ENCODE measurements at regions of chr16 and their contacts with region 1.

Region 1: DNA sequence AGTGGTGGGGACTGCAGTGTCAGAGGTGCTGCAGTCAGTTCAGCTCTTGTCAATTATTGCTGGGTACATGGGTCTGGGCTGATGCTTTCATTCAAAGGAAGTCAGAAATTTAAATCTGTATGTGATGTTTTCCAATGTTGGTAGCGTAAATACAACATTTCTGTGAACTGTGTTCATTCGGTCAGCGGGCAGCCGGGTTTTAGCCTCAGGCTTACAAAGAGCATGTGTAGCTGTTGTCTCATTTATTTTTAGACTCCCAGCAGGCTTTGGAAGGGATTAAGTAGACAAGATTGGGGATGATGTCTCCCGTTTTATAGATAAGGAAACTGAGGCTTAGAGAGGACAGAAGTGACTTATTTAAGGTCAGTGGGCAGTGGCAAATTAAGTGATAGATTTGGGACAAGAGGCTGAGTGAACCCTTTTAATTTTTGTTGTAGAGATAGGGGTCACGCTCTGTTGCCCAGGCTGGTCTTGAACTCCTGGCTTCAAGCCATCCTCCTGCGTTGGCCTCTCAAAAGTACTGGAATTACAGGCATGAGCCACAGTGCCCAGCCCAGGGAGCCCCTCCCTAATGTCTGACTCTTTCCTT is 8.1 kb downstream of the AQP8 start:
- DNase-seq: no peak
- ATAC-seq: no peak
- H3K4me3 Mint-ChIP-seq: no peak overlapping the region
- H3K27ac Mint-ChIP-seq: no peak overlapping the region
- H3K4me1 Mint-ChIP-seq: peaks cover 2% of the 10 kb centered on the region
- H3K27me3 Mint-ChIP-seq: no peaks in the 10 kb centered on the region

Region 2: GRCh38 chr16:24493859-24494258 is 731.0 kb before region 1 on chr16:
- CTCF ChIA-PET with region 1: no interaction called
- POLR2A ChIA-PET with region 1: no interaction called
- intact Hi-C with region 1: no loop called
- DNase-seq: no peak
- ATAC-seq: no peak
- H3K4me3 Mint-ChIP-seq: no peak overlapping the region
- H3K27ac Mint-ChIP-seq: no peak overlapping the region
- H3K4me1 Mint-ChIP-seq: no peaks in the 10 kb centered on the region
- H3K27me3 Mint-ChIP-seq: peaks cover 7% of the 10 kb centered on the region

Region 3: GRCh38 chr16:24516900-24517669 is 707.7 kb before region 1 on chr16:
- CTCF ChIA-PET with region 1: no interaction called
- POLR2A ChIA-PET with region 1: no interaction called
- intact Hi-C with region 1: loop called in 1 of 2 experiments (anchors 10 kb)
- DNase-seq: peak; percentile 86
- ATAC-seq: peak; percentile 78
- H3K4me3 Mint-ChIP-seq: peak overlapping the region; percentile 26
- H3K27ac Mint-ChIP-seq: no peak overlapping the region
- H3K4me1 Mint-ChIP-seq: peaks cover 4% of the 10 kb centered on the region
- H3K27me3 Mint-ChIP-seq: no peaks in the 10 kb centered on the region

Region 4: GRCh38 chr16:25126820-25127232 is 98.0 kb before region 1 on chr16:
- CTCF ChIA-PET with region 1: interaction called, 33 read pairs
- POLR2A ChIA-PET with region 1: no interaction called
- intact Hi-C with region 1: loop called (anchors 1 kb)
- DNase-seq: peak; percentile 78
- ATAC-seq: peak; percentile 90
- H3K4me3 Mint-ChIP-seq: no peak overlapping the region
- H3K27ac Mint-ChIP-seq: peak overlapping the region; percentile 45
- H3K4me1 Mint-ChIP-seq: peaks cover 34% of the 10 kb centered on the region
- H3K27me3 Mint-ChIP-seq: no peaks in the 10 kb centered on the region

Measured in activated CD4-positive, alpha-beta T cell treated with anti-CD3 and anti-CD28 coated beads for 36 hours (primary cell).